Aorta (tissue), 5 donors: ENCODE measurements at regions of chr7 and their contacts with region 1.

Region 1: GRCh38 chr7:150368096-150368883 is at the start of gene REPIN1:
- DNase-seq: peak; percentile 97
- ATAC-seq: peak; percentile 92
- H3K4me3 ChIP-seq: peak within 1 kb of the TSS; percentile 64 to 74
- H3K27ac ChIP-seq: peak within 1 kb of the TSS; percentile 62 to 88
- H3K4me1 ChIP-seq: no peaks in the 10 kb centered on the region
- H3K27me3 ChIP-seq: no peaks in the 10 kb centered on the region
- total RNA-seq, gene REPIN1: 52.0 to 56.7 TPM

Region 2: GRCh38 chr7:149729983-149730801 is 638.1 kb before region 1 on chr7:
- intact Hi-C with region 1: no loop called
- DNase-seq: peak in 1 of 2 donors; percentile 32
- ATAC-seq: no peak
- H3K4me3 ChIP-seq: no peak overlapping the region
- H3K27ac ChIP-seq: no peak overlapping the region
- H3K4me1 ChIP-seq: no peaks in the 10 kb centered on the region
- H3K27me3 ChIP-seq: no peaks in the 10 kb centered on the region

Region 3: GRCh38 chr7:150404805-150405583 is 36.7 kb after region 1 on chr7:
- intact Hi-C with region 1: loop called (anchors 1 to 2 kb)
- DNase-seq: peak; percentile 94 to 96
- ATAC-seq: peak; percentile 96
- H3K4me3 ChIP-seq: peak overlapping the region; percentile 60 to 63
- H3K27ac ChIP-seq: peak overlapping the region; percentile 46 to 58
- H3K4me1 ChIP-seq: no peaks in the 10 kb centered on the region
- H3K27me3 ChIP-seq: no peaks in the 10 kb centered on the region